ENCODE measurements at regions of chr5 and their contacts with region 1.

Region 1: GRCh38 chr5:43191740-43192557 is at the start of gene NIM1K:
- DNase-seq: peak; percentile 60
- H3K4me3 Mint-ChIP-seq: peak within 1 kb of the TSS; percentile 72
- H3K27ac Mint-ChIP-seq: no peak within 1 kb of the TSS
- H3K4me1 Mint-ChIP-seq: peaks cover 31% of the 10 kb centered on the region
- H3K27me3 Mint-ChIP-seq: peaks cover 20% of the 10 kb centered on the region
- total RNA-seq, gene NIM1K: 0.54 to 0.57 TPM

Region 2: DNA sequence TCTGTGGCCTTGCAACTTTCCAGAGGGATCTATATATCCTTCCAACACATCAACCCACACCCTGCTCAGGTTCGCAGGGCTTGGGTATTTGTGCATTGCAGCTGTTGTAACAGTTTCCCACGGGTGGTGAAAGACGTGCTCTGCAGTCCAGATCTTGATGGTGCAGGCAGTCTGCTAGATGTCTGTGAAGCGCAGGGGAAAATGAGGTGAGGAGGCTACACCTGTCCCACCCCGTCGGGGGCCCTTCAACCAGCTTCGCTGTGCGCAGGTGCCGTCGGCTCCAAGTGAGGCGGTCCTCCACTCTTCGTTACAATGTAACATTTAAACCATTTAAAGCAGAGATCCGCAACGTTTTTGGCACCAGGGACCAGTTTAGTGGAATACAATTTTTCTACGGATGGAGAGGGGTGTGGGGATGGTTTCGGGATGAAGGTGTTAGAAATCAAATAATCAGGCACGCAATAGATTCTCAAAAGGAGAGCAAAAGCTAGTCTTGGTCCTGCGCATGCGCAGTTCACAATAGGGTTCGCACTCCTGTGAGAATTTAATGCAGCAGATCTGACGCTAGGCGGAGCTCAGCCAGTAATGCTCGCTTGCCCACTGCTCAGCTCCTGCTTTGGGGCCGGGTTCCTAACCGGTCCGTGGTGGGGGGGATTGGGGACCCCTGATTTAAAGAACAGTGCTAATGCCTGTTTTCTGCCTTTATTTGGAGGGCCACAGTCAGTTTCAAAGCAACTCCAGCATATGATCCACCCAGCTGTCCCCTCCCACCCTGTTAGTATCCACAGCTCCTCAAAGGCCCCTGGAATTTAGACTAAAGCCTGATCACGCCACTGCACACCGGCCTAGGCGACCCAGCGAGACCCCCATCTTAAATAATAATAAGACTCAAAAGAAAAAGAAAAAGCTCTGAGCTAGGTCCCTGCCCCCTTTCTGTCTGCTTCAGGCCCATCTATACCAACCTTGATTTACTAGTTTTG is 283.1 kb before region 1 on chr5:
- CTCF ChIA-PET with region 1: interaction called, 3 read pairs
- intact Hi-C with region 1: loop called (anchors 2 kb)
- DNase-seq: peak; percentile 94
- H3K4me3 Mint-ChIP-seq: peak overlapping the region; percentile 92
- H3K27ac Mint-ChIP-seq: peak overlapping the region; percentile 75
- H3K4me1 Mint-ChIP-seq: peaks cover 10% of the 10 kb centered on the region
- H3K27me3 Mint-ChIP-seq: peaks cover 10% of the 10 kb centered on the region

Region 3: GRCh38 chr5:43040287-43041098 is 151.5 kb before region 1 on chr5 and contains the start of gene ANXA2R:
- CTCF ChIA-PET with region 1: no interaction called
- intact Hi-C with region 1: loop called (anchors 1 kb)
- DNase-seq: peak; percentile 98
- H3K4me3 Mint-ChIP-seq: peak within 1 kb of the TSS; percentile 96
- H3K27ac Mint-ChIP-seq: peak within 1 kb of the TSS; percentile 99
- H3K4me1 Mint-ChIP-seq: peaks cover 26% of the 10 kb centered on the region
- H3K27me3 Mint-ChIP-seq: no peaks in the 10 kb centered on the region
- total RNA-seq, gene ANXA2R: 6.0 to 6.5 TPM

Region 4: GRCh38 chr5:43110606-43111442 is 81.1 kb before region 1 on chr5:
- CTCF ChIA-PET with region 1: interaction called, 20 read pairs
- intact Hi-C with region 1: loop called (anchors 1 kb)
- DNase-seq: peak; percentile 81
- H3K4me3 Mint-ChIP-seq: no peak overlapping the region
- H3K27ac Mint-ChIP-seq: peak overlapping the region; percentile 71
- H3K4me1 Mint-ChIP-seq: peaks cover 43% of the 10 kb centered on the region
- H3K27me3 Mint-ChIP-seq: no peaks in the 10 kb centered on the region

Region 5: GRCh38 chr5:43134019-43134418 is 57.9 kb before region 1 on chr5:
- CTCF ChIA-PET with region 1: no interaction called
- intact Hi-C with region 1: no loop called
- DNase-seq: no peak
- H3K4me3 Mint-ChIP-seq: no peak overlapping the region
- H3K27ac Mint-ChIP-seq: no peak overlapping the region
- H3K4me1 Mint-ChIP-seq: peaks cover 51% of the 10 kb centered on the region
- H3K27me3 Mint-ChIP-seq: no peaks in the 10 kb centered on the region

Region 6: GRCh38 chr5:43233946-43234345 is 42.0 kb after region 1 on chr5:
- CTCF ChIA-PET with region 1: no interaction called
- intact Hi-C with region 1: loop called (anchors 1 kb)
- DNase-seq: no peak
- H3K4me3 Mint-ChIP-seq: no peak overlapping the region
- H3K27ac Mint-ChIP-seq: no peak overlapping the region
- H3K4me1 Mint-ChIP-seq: peaks cover 5% of the 10 kb centered on the region
- H3K27me3 Mint-ChIP-seq: no peaks in the 10 kb centered on the region

Region 7: GRCh38 chr5:43336159-43336558 is 144.2 kb after region 1 on chr5:
- CTCF ChIA-PET with region 1: no interaction called
- intact Hi-C with region 1: no loop called
- DNase-seq: peak; percentile 40
- H3K4me3 Mint-ChIP-seq: no peak overlapping the region
- H3K27ac Mint-ChIP-seq: peak overlapping the region; percentile 84
- H3K4me1 Mint-ChIP-seq: peaks cover 12% of the 10 kb centered on the region
- H3K27me3 Mint-ChIP-seq: peaks cover 16% of the 10 kb centered on the region

Region 8: DNA sequence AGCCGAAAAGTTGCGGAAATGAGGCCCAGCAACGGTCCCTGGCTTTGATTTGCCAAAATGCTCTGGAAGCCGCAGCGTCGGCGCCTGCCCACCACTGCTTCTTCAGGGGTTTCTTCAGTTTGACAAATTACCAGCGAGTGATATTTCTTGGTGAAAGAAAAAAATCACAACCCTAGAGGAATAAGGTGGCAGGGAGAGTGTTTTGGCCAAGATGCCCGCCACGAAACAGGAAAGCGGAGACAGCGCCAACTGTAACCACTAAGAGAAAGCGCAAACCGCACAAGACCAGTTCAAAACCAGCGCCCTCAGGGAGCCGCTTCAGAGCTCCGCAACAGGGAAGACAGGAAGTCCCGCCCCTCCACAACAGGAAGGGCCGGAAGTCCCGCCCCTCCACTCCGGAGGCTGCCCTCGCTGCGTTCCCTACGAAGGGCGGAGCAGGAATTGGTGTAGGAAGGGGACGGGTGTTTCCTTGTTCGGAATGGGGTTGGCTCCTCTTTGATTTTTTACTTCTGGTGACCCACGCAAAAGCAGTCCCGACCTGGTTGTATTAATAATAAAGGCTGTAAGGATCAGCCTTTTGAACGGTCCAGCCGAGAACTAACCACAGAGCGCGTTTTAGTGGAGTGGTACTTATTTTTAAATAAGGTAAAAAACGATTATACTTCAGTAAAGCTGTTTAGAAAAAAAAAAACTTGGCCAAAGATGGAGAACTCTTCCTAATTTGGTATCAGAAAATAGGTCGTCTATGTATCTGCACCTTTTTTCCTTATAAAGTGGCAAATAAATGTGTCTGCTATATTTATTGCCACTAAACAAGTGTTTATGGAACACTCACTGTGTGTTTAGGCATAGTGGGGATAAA is 323.1 kb after region 1 on chr5 and contains the start of gene C5orf34:
- CTCF ChIA-PET with region 1: no interaction called
- intact Hi-C with region 1: loop called (anchors 1 kb)
- DNase-seq: peak; percentile 98
- H3K4me3 Mint-ChIP-seq: peak within 1 kb of the TSS; percentile 94
- H3K27ac Mint-ChIP-seq: peak within 1 kb of the TSS; percentile 99
- H3K4me1 Mint-ChIP-seq: peaks cover 25% of the 10 kb centered on the region
- H3K27me3 Mint-ChIP-seq: no peaks in the 10 kb centered on the region
- total RNA-seq, gene C5orf34: 14.7 to 16.3 TPM

Region 9: DNA sequence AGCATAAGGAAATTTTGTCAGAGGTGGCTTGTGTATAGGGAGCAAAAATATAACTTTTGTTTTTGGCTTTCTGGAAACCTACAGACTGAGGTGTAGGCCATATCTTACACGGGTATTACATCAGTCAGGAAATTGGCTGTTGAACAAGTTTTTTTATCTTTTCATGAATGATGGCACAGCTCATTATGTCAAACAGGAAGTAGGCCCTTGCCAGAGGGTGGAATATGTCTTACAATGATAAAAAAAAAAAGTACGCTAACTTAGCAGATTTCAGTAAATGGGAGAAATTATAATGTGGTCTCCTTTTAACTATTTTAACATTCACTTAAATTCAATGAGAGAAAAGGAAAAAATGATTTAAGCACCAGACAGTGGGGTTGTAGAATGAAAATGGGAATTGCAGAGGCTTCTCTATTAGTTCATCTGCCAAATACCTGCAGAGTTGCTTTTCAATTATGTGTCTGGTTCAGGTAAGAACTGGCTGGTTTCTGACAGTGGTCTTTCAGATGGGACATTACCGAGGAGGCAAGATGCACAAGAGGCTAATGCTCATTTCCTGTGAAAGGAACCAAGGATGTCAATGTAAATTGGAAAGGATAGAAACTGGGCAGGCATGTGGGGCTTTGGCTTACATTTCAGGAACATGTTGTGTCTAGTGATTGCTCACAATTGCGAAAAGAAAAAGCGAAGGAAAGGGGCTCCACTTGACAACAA is 581.0 kb after region 1 on chr5:
- CTCF ChIA-PET with region 1: no interaction called
- intact Hi-C with region 1: loop called (anchors 5 kb)
- DNase-seq: no peak
- H3K4me3 Mint-ChIP-seq: no peak overlapping the region
- H3K27ac Mint-ChIP-seq: peak overlapping the region; percentile 82
- H3K4me1 Mint-ChIP-seq: peaks cover 21% of the 10 kb centered on the region
- H3K27me3 Mint-ChIP-seq: no peaks in the 10 kb centered on the region